HCT116 (cell line): ENCODE measurements at regions of chr1 and their contacts with region 1.

Region 1: GRCh38 chr1:18902523-18903290 is at the start of gene ALDH4A1:
- DNase-seq: peak; percentile 98
- ATAC-seq: peak; percentile 97
- H3K4me3 ChIP-seq: peak within 1 kb of the TSS; percentile 69 to 81
- H3K27ac ChIP-seq: peak within 1 kb of the TSS; percentile 64
- H3K4me1 ChIP-seq: peaks cover 12 to 18% of the 10 kb centered on the region in 2 experiments
- H3K27me3 ChIP-seq: no peaks in the 10 kb centered on the region
- CTCF ChIP-seq: no peak
- POLR2A ChIP-seq: peak; percentile 57
- RAD21 ChIP-seq: no peak
- total RNA-seq, gene ALDH4A1: 12.6 TPM

Region 2: DNA sequence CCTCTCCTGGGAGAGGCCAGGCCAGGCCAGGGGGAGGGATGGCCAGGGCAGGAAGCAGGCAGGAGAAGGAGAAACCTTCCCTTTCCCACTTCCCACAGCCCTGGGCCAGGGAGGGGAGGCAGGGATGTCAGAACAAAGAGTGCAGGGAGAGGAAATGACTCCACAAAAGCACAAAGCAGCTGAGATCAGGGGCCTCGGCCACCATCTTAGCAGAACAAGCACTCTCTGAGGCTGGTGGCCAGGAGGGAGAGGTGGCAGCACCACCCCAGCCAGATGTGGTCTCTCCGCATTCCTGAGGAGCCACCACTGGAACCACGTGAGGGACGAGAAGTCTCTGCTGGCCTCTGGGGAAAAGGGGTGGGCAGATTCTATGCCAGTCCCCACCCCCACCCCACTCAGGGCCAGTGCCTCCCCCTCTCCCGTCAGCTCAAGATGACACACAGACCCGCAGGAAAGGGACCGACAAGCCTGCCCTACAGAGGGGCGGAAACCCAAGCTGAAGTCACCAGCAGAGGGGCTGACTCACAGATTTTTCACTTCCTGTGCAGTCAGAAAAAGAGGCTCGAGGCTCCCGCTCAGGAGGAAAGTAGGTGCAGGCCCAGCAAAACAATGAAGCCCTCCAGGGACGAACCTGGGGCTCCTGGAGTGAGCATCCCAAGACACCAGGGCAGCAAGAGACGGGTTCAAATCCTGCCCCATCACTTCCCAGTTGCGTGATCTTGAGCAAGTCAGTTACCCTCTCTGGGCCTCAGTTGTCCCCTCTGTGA is 23.8 kb after region 1 on chr1:
- CTCF ChIA-PET with region 1: interaction called, 14 read pairs
- POLR2A ChIA-PET with region 1: no interaction called
- RAD21 ChIA-PET with region 1: no interaction called
- intact Hi-C with region 1: no loop called
- DNase-seq: peak; percentile 93
- ATAC-seq: peak; percentile 93
- H3K4me3 ChIP-seq: peak overlapping the region; percentile 43 to 66
- H3K27ac ChIP-seq: peak overlapping the region; percentile 97
- H3K4me1 ChIP-seq: peaks cover 42 to 85% of the 10 kb centered on the region in 2 experiments
- H3K27me3 ChIP-seq: no peaks in the 10 kb centered on the region
- CTCF ChIP-seq: no peak
- POLR2A ChIP-seq: peak; percentile 48
- RAD21 ChIP-seq: no peak; the same call in 1 of the 2 replicates

Region 3: GRCh38 chr1:18999359-18999758 is 96.7 kb after region 1 on chr1:
- CTCF ChIA-PET with region 1: no interaction called
- POLR2A ChIA-PET with region 1: no interaction called
- RAD21 ChIA-PET with region 1: no interaction called
- intact Hi-C with region 1: no loop called
- DNase-seq: no peak
- ATAC-seq: no peak
- H3K4me3 ChIP-seq: no peak overlapping the region
- H3K27ac ChIP-seq: no peak overlapping the region
- H3K4me1 ChIP-seq: peaks cover 0 to 6% of the 10 kb centered on the region in 2 experiments; a peak in 1 of 4 replicates
- H3K27me3 ChIP-seq: no peaks in the 10 kb centered on the region
- CTCF ChIP-seq: no peak
- POLR2A ChIP-seq: no peak
- RAD21 ChIP-seq: no peak

Region 4: GRCh38 chr1:19010995-19011844 is 108.5 kb after region 1 on chr1:
- CTCF ChIA-PET with region 1: no interaction called
- POLR2A ChIA-PET with region 1: no interaction called
- RAD21 ChIA-PET with region 1: no interaction called
- intact Hi-C with region 1: loop called (anchors 5 kb)
- DNase-seq: peak; percentile 94
- ATAC-seq: peak; percentile 75
- H3K4me3 ChIP-seq: peak overlapping the region; percentile 8 to 47; a peak in 2 of 4 replicates
- H3K27ac ChIP-seq: peak overlapping the region; percentile 89
- H3K4me1 ChIP-seq: peaks cover 39 to 86% of the 10 kb centered on the region in 2 experiments
- H3K27me3 ChIP-seq: no peaks in the 10 kb centered on the region
- CTCF ChIP-seq: no peak
- POLR2A ChIP-seq: no peak
- RAD21 ChIP-seq: peak; percentile 48

Region 5: DNA sequence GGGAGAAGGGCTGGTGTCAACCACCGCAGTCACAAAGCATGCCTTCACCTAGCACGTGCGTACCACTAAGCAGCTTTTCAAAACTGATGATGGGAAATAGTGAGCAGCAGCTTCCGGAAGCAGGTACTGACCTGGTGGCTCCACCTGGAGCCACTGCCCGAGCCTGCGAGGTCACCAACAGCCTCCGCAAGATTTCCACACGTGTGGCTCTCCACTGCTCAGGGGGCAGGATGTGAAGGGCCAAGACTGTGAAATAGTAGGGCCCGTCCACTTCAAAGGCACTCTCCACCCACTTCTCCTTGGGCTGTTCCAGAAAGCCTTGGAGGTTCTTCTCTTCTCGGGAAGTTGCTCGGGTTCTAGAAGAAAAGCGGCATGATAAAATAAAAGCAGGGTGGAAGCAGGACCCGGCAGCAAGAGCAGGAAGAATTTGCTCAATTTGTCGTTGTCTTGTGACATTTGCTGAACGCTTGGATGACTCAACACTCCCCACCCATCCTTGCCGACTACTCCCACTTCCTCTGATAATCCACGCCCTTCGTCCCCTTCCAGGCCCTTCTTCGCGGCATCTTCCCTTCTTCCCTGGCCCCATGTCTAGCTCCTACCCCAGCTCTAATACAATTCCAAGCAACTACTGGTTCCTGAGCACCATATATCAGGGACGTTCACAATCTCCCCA is 178.6 kb after region 1 on chr1:
- CTCF ChIA-PET with region 1: no interaction called
- POLR2A ChIA-PET with region 1: no interaction called
- RAD21 ChIA-PET with region 1: no interaction called
- intact Hi-C with region 1: no loop called
- DNase-seq: no peak
- ATAC-seq: no peak
- H3K4me3 ChIP-seq: no peak overlapping the region
- H3K27ac ChIP-seq: no peak overlapping the region
- H3K4me1 ChIP-seq: peaks cover 0 to 14% of the 10 kb centered on the region in 2 experiments; a peak in 3 of 4 replicates
- H3K27me3 ChIP-seq: no peaks in the 10 kb centered on the region
- CTCF ChIP-seq: no peak
- POLR2A ChIP-seq: no peak
- RAD21 ChIP-seq: no peak

Region 6: GRCh38 chr1:19240673-19241538 is 338.2 kb after region 1 on chr1:
- CTCF ChIA-PET with region 1: no interaction called
- POLR2A ChIA-PET with region 1: no interaction called
- RAD21 ChIA-PET with region 1: no interaction called
- intact Hi-C with region 1: loop called (anchors 2 kb)
- DNase-seq: peak; percentile 18
- ATAC-seq: peak; percentile 95
- H3K4me3 ChIP-seq: no peak overlapping the region
- H3K27ac ChIP-seq: no peak overlapping the region
- H3K4me1 ChIP-seq: no peaks in the 10 kb centered on the region
- H3K27me3 ChIP-seq: no peaks in the 10 kb centered on the region
- CTCF ChIP-seq: peak; percentile 72 to 96 (median 92)
- POLR2A ChIP-seq: no peak
- RAD21 ChIP-seq: peak; percentile 81